B cell (primary cell): ENCODE measurements at regions of chr13 and their contacts with region 1.

Region 1: GRCh38 chr13:70856711-70857110 is 748.5 kb upstream of the KLHL1 start:
- DNase-seq: no peak
- ATAC-seq: no peak
- H3K4me3 ChIP-seq: no peak overlapping the region
- H3K4me3 Mint-ChIP-seq: no peak overlapping the region
- H3K27ac ChIP-seq: no peak overlapping the region
- H3K27ac Mint-ChIP-seq: no peak overlapping the region
- H3K4me1 ChIP-seq: no peaks in the 10 kb centered on the region
- H3K4me1 Mint-ChIP-seq: no peaks in the 10 kb centered on the region
- H3K27me3 ChIP-seq: no peaks in the 10 kb centered on the region
- H3K27me3 Mint-ChIP-seq: no peaks in the 10 kb centered on the region
- CTCF ChIP-seq: no peak

Region 2: GRCh38 chr13:70844391-70845108 is 12.2 kb before region 1 on chr13:
- CTCF ChIA-PET with region 1: no interaction called
- POLR2A ChIA-PET with region 1: no interaction called
- intact Hi-C with region 1: loop called (anchors 1 kb)
- DNase-seq: no peak
- ATAC-seq: no peak
- H3K4me3 ChIP-seq: no peak overlapping the region
- H3K4me3 Mint-ChIP-seq: no peak overlapping the region
- H3K27ac ChIP-seq: no peak overlapping the region
- H3K27ac Mint-ChIP-seq: no peak overlapping the region
- H3K4me1 ChIP-seq: no peaks in the 10 kb centered on the region
- H3K4me1 Mint-ChIP-seq: no peaks in the 10 kb centered on the region
- H3K27me3 ChIP-seq: no peaks in the 10 kb centered on the region
- H3K27me3 Mint-ChIP-seq: no peaks in the 10 kb centered on the region
- CTCF ChIP-seq: no peak

Region 3: GRCh38 chr13:70874636-70875035 is 17.9 kb after region 1 on chr13:
- CTCF ChIA-PET with region 1: no interaction called
- POLR2A ChIA-PET with region 1: no interaction called
- intact Hi-C with region 1: no loop called
- DNase-seq: no peak
- ATAC-seq: no peak
- H3K4me3 ChIP-seq: no peak overlapping the region
- H3K4me3 Mint-ChIP-seq: no peak overlapping the region
- H3K27ac ChIP-seq: no peak overlapping the region
- H3K27ac Mint-ChIP-seq: no peak overlapping the region
- H3K4me1 ChIP-seq: no peaks in the 10 kb centered on the region
- H3K4me1 Mint-ChIP-seq: no peaks in the 10 kb centered on the region
- H3K27me3 ChIP-seq: no peaks in the 10 kb centered on the region
- H3K27me3 Mint-ChIP-seq: no peaks in the 10 kb centered on the region
- CTCF ChIP-seq: no peak

Region 4: GRCh38 chr13:71368336-71368735 is 511.6 kb after region 1 on chr13:
- CTCF ChIA-PET with region 1: no interaction called
- POLR2A ChIA-PET with region 1: no interaction called
- intact Hi-C with region 1: no loop called
- DNase-seq: no peak
- ATAC-seq: no peak
- H3K4me3 ChIP-seq: no peak overlapping the region
- H3K4me3 Mint-ChIP-seq: no peak overlapping the region
- H3K27ac ChIP-seq: no peak overlapping the region
- H3K27ac Mint-ChIP-seq: no peak overlapping the region
- H3K4me1 ChIP-seq: no peaks in the 10 kb centered on the region
- H3K4me1 Mint-ChIP-seq: no peaks in the 10 kb centered on the region
- H3K27me3 ChIP-seq: no peaks in the 10 kb centered on the region
- H3K27me3 Mint-ChIP-seq: no peaks in the 10 kb centered on the region
- CTCF ChIP-seq: no peak